Mammary epithelial cell (primary cell): ENCODE measurements at regions of chr15 and their contacts with region 1.

Region 1: DNA sequence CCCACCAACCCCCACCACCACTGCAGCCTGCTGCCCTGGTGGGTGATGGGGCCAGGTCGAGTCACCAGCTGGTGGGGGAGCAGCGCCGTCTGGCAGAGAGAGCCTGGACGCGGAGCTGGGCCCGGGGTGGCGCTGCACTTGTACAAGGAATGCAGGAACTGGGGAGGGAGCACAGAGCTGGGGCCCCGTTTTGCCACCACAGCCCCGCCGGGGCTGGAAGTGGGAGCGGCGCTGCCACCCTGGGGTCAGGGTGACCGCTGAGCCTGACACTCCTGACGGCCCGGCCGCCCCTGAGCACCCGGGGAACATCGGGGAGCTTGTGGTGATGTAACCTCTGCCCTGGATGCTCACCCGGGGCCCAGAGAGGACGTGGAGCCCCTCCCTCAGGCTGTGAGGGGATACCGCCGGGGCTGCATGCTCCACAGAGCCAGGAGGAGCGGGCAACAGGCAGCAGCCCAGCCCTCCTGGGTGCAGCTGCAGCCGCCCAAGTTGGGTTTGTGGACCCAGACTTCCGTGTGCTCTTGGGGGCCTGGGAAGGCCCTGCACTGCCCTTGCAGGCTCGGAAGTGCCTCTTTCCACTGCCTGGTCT is 32.6 kb upstream of the IREB2 start:
- DNase-seq: no peak
- H3K4me3 ChIP-seq: no peak overlapping the region
- H3K27ac ChIP-seq: no peak overlapping the region
- H3K4me1 ChIP-seq: peaks cover 17% of the 10 kb centered on the region
- H3K27me3 ChIP-seq: no peaks in the 10 kb centered on the region
- CTCF ChIP-seq: no peak

Region 2: GRCh38 chr15:78329625-78330024 is 75.8 kb before region 1 on chr15:
- CTCF ChIA-PET with region 1: no interaction called
- dilution Hi-C with region 1: loop called (anchors 5 kb)
- in situ Hi-C with region 1: no loop called
- intact Hi-C with region 1: no loop called
- DNase-seq: no peak
- H3K4me3 ChIP-seq: no peak overlapping the region
- H3K27ac ChIP-seq: no peak overlapping the region
- H3K4me1 ChIP-seq: no peaks in the 10 kb centered on the region
- H3K27me3 ChIP-seq: no peaks in the 10 kb centered on the region
- CTCF ChIP-seq: no peak